Esophagus muscularis mucosa (tissue), 4 donors: ENCODE measurements at regions of chr7 and their contacts with region 1.

Region 1: GRCh38 chr7:14902589-14903067 is at the start of gene DGKB:
- DNase-seq: no peak
- H3K4me3 ChIP-seq: peak within 1 kb of the TSS; percentile 54 to 68 (median 62)
- H3K27ac ChIP-seq: peak within 1 kb of the TSS; percentile 73 to 83 (median 80)
- H3K4me1 ChIP-seq: peaks cover 0 to 40% (median 28%) of the 10 kb centered on the region in 4 donors
- H3K27me3 ChIP-seq: no peaks in the 10 kb centered on the region
- CTCF ChIP-seq: no peak
- EP300 ChIP-seq: no peak
- POLR2A ChIP-seq: no peak
- total RNA-seq, gene DGKB: 10.4 to 18.5 (median 16.0) TPM

Region 2: GRCh38 chr7:14717816-14718215 is 184.8 kb before region 1 on chr7:
- intact Hi-C with region 1: loop called (anchors 10 kb)
- DNase-seq: no peak
- H3K4me3 ChIP-seq: no peak overlapping the region
- H3K27ac ChIP-seq: no peak overlapping the region
- H3K4me1 ChIP-seq: peaks cover 0 to 4% (median 1%) of the 10 kb centered on the region in 4 donors
- H3K27me3 ChIP-seq: no peaks in the 10 kb centered on the region
- CTCF ChIP-seq: peak; percentile 61 to 65 (median 63)
- EP300 ChIP-seq: no peak
- POLR2A ChIP-seq: no peak

Region 3: DNA sequence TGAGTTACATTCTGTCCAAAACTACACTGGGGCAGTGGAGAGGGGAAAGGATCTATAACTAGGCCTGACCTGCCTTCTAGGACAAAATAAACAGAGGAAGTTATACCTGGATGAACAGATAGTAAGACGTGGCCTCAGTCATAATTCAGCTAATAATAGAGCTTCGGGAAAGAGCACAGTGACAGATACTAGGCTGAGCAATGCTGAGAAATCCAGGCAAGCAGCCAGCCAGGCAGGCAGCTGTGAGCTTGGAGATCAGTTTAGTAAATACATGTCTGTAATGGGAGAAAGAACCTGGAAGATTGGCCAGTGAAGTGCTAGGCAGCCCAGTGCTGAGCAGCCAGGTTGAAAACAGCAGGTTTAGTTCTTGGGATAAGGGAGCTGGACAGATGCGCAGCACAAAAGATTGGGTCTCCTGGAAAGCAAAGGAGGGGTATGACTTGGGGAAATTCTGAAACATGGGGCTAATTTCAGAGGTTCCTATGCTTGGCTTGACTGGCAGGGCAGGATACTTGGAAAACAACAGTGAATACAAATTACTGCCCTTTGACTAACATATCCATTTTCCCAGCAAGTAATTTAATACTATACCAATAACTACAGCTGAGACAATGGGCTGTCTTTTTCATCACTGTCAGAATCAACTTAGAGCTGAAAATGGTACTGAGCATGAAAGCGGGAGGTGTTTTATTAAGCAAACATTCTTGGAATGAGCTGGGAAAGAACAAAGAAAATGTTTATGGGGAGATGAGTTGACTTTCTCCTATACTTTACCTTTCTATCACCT is 140.9 kb before region 1 on chr7:
- intact Hi-C with region 1: loop called (anchors 5 kb)
- DNase-seq: no peak
- H3K4me3 ChIP-seq: peak overlapping the region in 2 of 4 donors; percentile 3 to 11
- H3K27ac ChIP-seq: peak overlapping the region; percentile 67 to 85 (median 77)
- H3K4me1 ChIP-seq: peaks cover 19 to 40% (median 27%) of the 10 kb centered on the region in 4 donors
- H3K27me3 ChIP-seq: no peaks in the 10 kb centered on the region
- CTCF ChIP-seq: no peak
- EP300 ChIP-seq: no peak
- POLR2A ChIP-seq: no peak

Region 4: DNA sequence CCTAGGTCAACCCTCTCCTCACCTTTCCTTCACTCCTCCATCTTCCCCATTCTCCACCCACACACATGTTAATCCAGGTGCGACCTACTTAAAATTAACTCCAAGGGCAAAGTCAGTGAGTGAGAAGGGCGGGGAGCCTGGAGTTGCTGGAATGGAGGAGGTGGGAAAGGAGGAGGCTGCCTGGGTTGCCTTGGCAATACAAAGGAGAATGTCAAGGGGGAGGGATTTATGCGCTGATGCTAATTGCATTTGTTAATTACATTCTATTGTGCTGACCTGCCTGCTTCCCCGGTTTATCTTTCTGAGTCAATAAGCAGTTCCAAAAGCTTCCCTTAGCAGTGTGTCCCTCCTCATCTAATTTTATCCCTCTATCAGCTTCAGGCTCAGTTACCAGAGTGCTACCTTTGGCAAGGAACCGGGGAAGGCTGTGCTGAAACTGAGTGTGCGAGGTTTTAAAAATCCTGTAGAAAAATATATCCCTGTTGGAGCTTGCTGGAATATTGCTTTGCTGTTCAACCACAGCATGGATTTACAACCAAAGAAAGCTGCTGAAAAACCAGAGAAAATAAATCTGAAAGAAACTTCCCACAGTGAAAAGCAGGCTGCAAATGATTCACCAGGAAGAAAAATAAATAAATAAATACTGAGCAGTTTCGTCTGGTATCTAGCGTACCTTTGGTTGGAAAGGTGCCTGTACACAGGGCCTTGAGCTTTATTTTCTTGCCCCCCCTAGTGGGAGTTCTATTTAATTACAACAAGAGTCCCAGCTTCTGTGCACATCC is 113.1 kb after region 1 on chr7:
- intact Hi-C with region 1: loop called (anchors 10 kb)
- DNase-seq: no peak
- H3K4me3 ChIP-seq: peak overlapping the region; percentile 26 to 45 (median 34)
- H3K27ac ChIP-seq: no peak overlapping the region
- H3K4me1 ChIP-seq: peaks cover 0 to 11% (median 8%) of the 10 kb centered on the region in 4 donors
- H3K27me3 ChIP-seq: no peaks in the 10 kb centered on the region
- CTCF ChIP-seq: peak; percentile 63 to 71 (median 71)
- EP300 ChIP-seq: no peak
- POLR2A ChIP-seq: no peak